WTC11 (cell line): ENCODE measurements at regions of chr17 and their contacts with region 1.

Region 1: DNA sequence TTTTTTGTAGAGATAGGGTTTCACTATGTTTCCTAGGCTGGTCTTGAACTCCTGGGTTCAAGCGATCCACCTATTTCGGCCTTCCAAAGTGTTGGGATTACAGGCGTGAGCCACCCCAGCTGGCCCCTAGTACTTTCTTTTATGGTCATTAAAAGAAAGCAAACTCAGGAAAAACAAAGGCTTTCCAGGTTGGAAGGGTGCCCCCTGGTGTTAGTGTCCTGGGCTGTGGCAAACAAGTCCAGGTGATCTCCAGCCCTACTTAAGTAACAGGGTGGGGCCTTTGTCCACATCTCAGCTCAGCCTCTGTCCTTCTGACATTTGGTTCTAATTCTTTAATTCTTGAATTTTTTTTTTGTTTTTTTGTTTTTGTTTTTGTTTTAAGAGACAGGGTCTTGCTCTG is 6.9 kb downstream of the IGFBP4 start:
- DNase-seq: peak; percentile 78
- ATAC-seq: peak; percentile 46; the same call in 1 of the 2 replicates
- H3K4me3 Mint-ChIP-seq: no peak overlapping the region
- H3K27ac Mint-ChIP-seq: peak overlapping the region; percentile 88; the same call in 1 of the 2 replicates
- H3K4me1 Mint-ChIP-seq: peaks cover 44% of the 10 kb centered on the region
- H3K27me3 Mint-ChIP-seq: no peaks in the 10 kb centered on the region
- CTCF ChIP-seq: 0 out of 2 replicates have a peak, but pooled peaks have one; percentile 22

Region 2: DNA sequence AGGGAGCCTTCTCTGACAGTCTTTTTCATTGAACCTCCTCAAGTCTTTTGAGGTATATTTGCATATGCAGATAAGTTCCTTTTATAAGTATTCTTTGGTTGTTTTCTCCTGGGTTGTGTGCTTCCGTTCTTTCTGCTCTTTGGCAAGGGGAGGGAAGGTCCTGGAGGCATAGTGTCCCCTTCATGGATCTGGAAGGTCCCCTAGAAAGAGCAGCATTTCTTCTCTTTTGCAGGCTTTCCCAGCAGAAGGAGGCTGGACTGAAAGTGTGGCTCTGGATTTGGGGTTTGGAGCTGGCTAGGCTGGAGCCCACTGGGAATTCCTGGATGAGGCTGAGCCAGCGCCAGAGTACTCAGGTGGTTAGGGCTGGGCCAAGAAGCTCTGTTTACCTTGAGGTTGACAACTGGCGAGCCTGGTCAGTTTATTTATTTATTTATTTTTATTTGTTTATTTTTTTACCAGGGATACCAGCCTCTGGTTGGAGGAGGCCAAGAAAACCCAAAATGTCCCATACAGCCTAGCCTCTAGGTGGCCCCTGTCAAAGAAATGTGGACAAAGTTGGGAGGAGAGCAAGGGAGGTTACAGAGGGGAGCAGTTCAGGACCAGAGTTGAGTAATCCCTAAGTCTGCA is 27.1 kb before region 1 on chr17:
- CTCF ChIA-PET with region 1: interaction called, 14 read pairs
- POLR2A ChIA-PET with region 1: interaction called, 4 read pairs
- DNase-seq: peak; percentile 67
- ATAC-seq: peak; percentile 80
- H3K4me3 Mint-ChIP-seq: peak overlapping the region; percentile 51
- H3K27ac Mint-ChIP-seq: peak overlapping the region; percentile 91
- H3K4me1 Mint-ChIP-seq: peaks cover 49% of the 10 kb centered on the region
- H3K27me3 Mint-ChIP-seq: no peaks in the 10 kb centered on the region; the same call in 1 of the 2 replicates
- CTCF ChIP-seq: no peak

Region 3: DNA sequence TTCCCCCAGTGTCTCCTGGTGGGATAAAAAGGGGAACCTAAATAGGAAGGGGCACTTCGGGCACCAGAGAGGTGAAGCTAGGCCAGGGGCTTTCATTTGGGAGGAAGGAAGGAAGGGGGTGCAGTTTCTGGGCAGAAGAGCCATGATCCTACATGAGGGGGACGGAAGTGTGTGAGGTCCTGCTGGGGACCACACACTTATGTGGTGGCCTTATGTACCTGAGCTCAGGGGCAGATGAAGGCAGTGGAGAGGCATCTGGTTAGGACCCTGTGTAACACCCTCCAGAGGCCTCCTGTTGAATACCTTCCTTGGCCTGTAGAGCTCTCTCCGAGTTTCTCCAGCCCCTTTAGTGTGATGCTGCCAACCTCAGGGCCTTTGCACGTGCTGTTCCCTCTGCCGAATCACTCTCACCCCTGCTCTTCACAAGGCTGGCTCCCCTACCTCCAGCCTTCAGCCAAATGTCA is 14.2 kb after region 1 on chr17:
- CTCF ChIA-PET with region 1: interaction called, 10 read pairs
- POLR2A ChIA-PET with region 1: no interaction called
- DNase-seq: no peak
- ATAC-seq: peak; percentile 8
- H3K4me3 Mint-ChIP-seq: no peak overlapping the region
- H3K27ac Mint-ChIP-seq: peak overlapping the region; percentile 57
- H3K4me1 Mint-ChIP-seq: peaks cover 59% of the 10 kb centered on the region
- H3K27me3 Mint-ChIP-seq: peaks cover 3% of the 10 kb centered on the region
- CTCF ChIP-seq: no peak